Ovary (tissue), 10 donors: ENCODE measurements at regions of chr2 and their contacts with region 1.

Region 1: GRCh38 chr2:28661589-28662001 is 90.0 kb upstream of the PPP1CB start:
- DNase-seq: peak; percentile 61 to 80 (median 80)
- H3K4me3 ChIP-seq: no peak overlapping the region
- H3K27ac ChIP-seq: no peak overlapping the region
- H3K4me1 ChIP-seq: peaks cover 33% of the 10 kb centered on the region
- H3K27me3 ChIP-seq: no peaks in the 10 kb centered on the region
- CTCF ChIP-seq: no peak
- EP300 ChIP-seq: no peak
- POLR2A ChIP-seq: no peak

Region 2: DNA sequence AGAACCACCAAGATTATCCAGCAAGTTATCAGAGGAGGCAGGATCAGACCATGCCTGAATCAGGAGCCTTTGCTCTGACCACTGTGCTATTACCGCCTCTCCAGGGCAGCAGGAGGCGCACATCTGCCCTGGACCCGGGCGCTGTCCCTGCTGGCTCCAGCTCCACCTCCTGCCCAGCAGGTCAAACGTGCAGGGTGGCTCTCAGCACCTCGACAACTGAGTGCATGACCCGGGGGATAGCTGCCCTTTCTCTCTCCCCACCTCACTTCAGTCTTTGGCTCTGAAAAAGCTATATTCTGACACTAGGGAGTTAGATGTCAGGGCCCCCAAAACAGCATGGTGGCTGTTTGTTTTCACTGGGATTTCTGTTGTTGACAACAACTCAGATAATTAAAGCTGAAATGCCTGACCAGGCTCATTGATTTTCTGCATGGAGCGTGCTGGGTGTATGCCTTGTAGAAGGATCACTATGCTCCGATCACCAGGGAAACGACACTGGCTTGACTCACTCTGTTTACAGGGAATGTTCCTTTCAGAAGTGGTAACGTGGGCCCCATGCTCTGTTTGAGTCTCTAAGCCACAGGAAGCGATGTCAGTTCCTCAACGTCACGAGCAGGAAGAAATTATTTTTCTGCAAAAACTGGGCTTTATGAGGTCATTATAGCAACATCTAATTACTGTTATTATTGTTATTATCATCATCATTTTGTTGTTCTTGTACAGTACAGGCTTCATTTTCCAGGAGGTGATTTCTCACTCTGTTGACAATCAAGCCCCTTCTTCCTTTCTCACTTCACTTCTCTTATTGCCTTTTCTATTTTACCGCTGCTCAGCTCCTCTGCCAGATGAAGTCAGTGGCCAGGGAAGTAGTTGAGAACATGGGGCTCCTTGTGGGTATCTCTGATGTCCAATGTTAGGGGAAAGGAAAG is 40.2 kb before region 1 on chr2:
- intact Hi-C with region 1: loop called in 2 of 4 experiments (anchors 5 kb)
- DNase-seq: peak; percentile 59 to 91 (median 66)
- H3K4me3 ChIP-seq: no peak overlapping the region
- H3K27ac ChIP-seq: peak overlapping the region; percentile 44 to 57
- H3K4me1 ChIP-seq: peaks cover 19% of the 10 kb centered on the region
- H3K27me3 ChIP-seq: no peaks in the 10 kb centered on the region
- CTCF ChIP-seq: no peak
- EP300 ChIP-seq: peak; percentile 71
- POLR2A ChIP-seq: peak; percentile 20

Region 3: GRCh38 chr2:28736034-28736433 is 74.4 kb after region 1 on chr2:
- intact Hi-C with region 1: no loop called
- DNase-seq: peak in 3 of 5 donors; percentile 45 to 53 (median 48)
- H3K4me3 ChIP-seq: no peak overlapping the region
- H3K27ac ChIP-seq: no peak overlapping the region
- H3K4me1 ChIP-seq: peaks cover 3% of the 10 kb centered on the region
- H3K27me3 ChIP-seq: no peaks in the 10 kb centered on the region
- CTCF ChIP-seq: no peak
- EP300 ChIP-seq: no peak
- POLR2A ChIP-seq: no peak

Region 4: DNA sequence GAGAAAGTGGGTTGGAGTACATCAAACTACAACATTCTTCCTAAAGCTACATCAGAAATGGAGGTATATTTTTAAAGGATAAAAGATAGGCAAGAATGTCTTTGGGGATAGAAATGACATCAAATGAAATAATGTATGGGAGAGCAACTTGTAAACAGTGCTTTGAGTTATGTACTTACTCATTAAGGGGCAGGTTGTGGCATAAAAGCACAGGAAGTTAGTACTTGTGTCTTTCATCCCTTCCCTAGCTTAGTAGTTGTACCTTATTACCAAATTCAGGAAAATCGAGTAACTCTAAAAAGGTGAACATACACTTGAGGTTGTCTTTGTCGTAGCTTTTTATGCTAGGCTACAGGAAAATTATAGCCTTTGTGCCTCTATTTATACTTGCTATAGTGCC is 118.9 kb after region 1 on chr2:
- intact Hi-C with region 1: no loop called
- DNase-seq: no peak
- H3K4me3 ChIP-seq: no peak overlapping the region
- H3K27ac ChIP-seq: no peak overlapping the region
- H3K4me1 ChIP-seq: no peaks in the 10 kb centered on the region
- H3K27me3 ChIP-seq: no peaks in the 10 kb centered on the region
- CTCF ChIP-seq: no peak
- EP300 ChIP-seq: no peak
- POLR2A ChIP-seq: no peak

Region 5: DNA sequence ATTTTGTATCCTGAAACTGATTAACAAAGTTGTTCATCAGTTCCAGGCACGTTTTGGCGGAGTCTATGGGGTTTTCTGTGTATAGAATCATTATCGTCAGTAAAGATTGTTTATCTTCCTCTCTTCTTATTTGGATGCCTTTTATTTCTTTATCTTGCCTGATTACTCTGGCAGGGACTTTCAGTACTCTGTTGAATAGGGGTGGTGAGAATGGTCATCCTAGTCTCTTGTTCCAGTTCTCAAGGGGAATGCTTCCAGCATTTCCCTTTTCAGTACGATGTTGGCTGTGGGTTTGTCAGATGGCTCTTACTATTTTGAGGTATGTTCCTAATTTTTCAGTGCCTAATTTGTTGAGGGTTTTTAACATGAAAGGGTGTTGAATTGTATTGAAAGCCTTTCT is 135.0 kb after region 1 on chr2:
- intact Hi-C with region 1: loop called in 1 of 4 experiments (anchors 5 kb)
- DNase-seq: no peak
- H3K4me3 ChIP-seq: no peak overlapping the region
- H3K27ac ChIP-seq: no peak overlapping the region
- H3K4me1 ChIP-seq: no peaks in the 10 kb centered on the region
- H3K27me3 ChIP-seq: no peaks in the 10 kb centered on the region
- CTCF ChIP-seq: no peak
- EP300 ChIP-seq: no peak
- POLR2A ChIP-seq: no peak

Region 6: GRCh38 chr2:28835781-28836180 is 174.2 kb after region 1 on chr2:
- intact Hi-C with region 1: no loop called
- DNase-seq: no peak
- H3K4me3 ChIP-seq: no peak overlapping the region
- H3K27ac ChIP-seq: no peak overlapping the region
- H3K4me1 ChIP-seq: no peaks in the 10 kb centered on the region
- H3K27me3 ChIP-seq: no peaks in the 10 kb centered on the region
- CTCF ChIP-seq: no peak
- EP300 ChIP-seq: no peak
- POLR2A ChIP-seq: no peak

Region 7: DNA sequence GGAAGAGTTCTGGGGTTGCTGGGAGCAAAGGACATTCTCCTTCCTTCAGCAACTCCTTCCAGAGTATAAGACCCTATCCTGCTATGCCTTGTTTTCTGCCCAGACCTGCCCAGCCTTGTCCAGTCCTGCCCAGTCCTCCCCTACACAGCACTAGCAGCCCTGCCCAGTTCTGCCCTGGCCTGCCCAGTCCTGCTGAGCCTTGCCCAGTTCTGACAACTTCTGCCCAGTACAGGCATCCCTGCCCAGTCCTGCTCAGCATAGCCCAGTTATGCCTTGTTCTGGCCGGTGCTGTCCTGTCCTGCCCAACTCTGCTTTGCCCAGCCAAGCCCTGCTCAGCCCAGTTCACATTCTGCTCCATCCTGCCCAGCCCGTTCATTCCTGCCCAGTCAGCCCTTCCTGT is 1304.7 kb after region 1 on chr2:
- intact Hi-C with region 1: no loop called
- DNase-seq: no peak
- H3K4me3 ChIP-seq: no peak overlapping the region
- H3K27ac ChIP-seq: no peak overlapping the region
- H3K4me1 ChIP-seq: no peaks in the 10 kb centered on the region
- H3K27me3 ChIP-seq: no peaks in the 10 kb centered on the region
- CTCF ChIP-seq: no peak
- EP300 ChIP-seq: no peak
- POLR2A ChIP-seq: no peak